Activated T-helper 1 cell treated with anti-CD3 and anti-CD28 coated beads, Interleukin-12 subunit alpha, Interleukin-12 subunit beta, Interleukin-2, Interleukin-4 antibody, amounts not matched to agents 30 ng/mL and 10 ng/mL and 1 ng/mL, durations not matched to agents 14 hours and 24 hours and 36 hours (primary cell): ENCODE measurements at regions of chr4 and their contacts with region 1.

Region 1: GRCh38 chr4:81069706-81070331 is 39.3 kb downstream of the BMP3 start:
- DNase-seq: peak; percentile 40
- H3K4me3 Mint-ChIP-seq: no peak overlapping the region
- H3K27ac Mint-ChIP-seq: no peak overlapping the region
- H3K4me1 Mint-ChIP-seq: no peaks in the 10 kb centered on the region
- H3K27me3 Mint-ChIP-seq: peaks cover 2% of the 10 kb centered on the region

Region 2: DNA sequence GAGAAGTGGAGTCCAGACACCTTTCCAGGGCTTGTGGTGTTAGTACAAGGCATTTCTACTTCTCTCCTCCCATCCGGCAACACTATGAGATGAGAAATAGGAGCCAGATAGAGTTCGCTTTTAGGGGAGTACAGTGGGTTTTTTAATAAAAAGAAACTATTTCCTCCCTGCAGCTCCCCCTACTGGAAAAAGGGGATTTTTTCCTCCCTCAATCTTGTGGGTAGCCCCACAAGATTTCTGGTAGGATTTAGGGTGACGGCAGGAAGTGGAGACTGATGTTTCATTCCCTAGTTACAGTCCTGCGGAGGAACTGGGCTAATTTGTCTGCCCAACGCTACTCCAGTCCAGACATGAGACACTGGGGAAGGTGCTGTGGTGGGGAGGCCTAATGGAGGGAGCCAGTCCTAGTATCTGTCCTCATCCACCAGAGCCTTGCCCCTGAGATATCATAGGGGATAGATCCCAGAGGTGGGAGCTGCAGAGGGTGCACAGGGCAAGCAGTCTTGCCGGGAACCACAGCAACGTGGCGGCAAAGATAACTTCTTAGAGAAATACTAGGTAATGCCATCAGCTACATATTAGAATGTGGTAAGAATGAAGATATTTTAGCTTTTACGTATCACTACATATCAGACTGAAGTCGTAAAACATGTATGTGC is 190.8 kb after region 1 on chr4:
- intact Hi-C with region 1: loop called (anchors 10 kb)
- DNase-seq: no peak
- H3K4me3 Mint-ChIP-seq: no peak overlapping the region
- H3K27ac Mint-ChIP-seq: no peak overlapping the region
- H3K4me1 Mint-ChIP-seq: no peaks in the 10 kb centered on the region
- H3K27me3 Mint-ChIP-seq: no peaks in the 10 kb centered on the region

Region 3: GRCh38 chr4:81351654-81352445 is 282.0 kb after region 1 on chr4:
- intact Hi-C with region 1: loop called (anchors 1 kb)
- DNase-seq: peak; percentile 34
- H3K4me3 Mint-ChIP-seq: no peak overlapping the region
- H3K27ac Mint-ChIP-seq: no peak overlapping the region
- H3K4me1 Mint-ChIP-seq: no peaks in the 10 kb centered on the region
- H3K27me3 Mint-ChIP-seq: peaks cover under 1% of the 10 kb centered on the region